Cardiac septum (tissue), 1 donor: ENCODE measurements at regions of chr17 and their contacts with region 1.

Region 1: GRCh38 chr17:78970834-78971773 is 8.6 kb downstream of the LGALS3BP start:
- DNase-seq: peak; percentile 90

Region 2: DNA sequence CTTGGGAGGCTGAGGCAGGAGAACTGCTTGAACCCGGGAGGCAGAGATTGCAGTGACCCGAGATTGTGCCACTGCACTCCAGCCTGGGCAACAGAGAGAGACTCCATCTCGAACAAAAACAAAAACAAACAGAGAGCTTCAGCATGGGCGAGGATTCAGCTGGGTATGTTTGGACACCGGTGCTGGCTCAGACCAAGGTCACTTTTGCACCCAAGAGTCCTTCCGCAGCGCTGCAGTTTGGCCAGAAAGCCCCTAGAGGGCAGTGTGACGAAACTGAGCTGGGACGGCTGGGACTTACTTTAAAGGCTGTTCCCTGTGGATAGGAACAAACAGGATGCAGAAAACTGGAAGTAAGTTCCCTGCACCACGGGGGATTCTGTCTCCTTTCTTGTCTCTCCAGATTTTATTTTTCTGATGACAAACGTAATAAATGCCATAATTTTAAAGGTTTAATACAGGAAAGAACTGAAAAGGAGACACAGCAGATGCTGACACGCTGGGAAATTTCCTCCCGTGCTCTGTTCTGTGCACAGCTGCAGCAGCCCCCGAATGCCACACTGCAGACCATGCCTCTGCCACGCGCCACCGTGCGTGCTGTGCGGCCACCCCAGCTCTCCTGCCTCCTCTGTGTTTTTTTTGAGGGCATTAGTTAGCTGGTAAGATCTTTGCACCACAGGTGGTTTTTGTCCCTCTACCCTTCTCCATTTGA is 105.3 kb before region 1 on chr17:
- intact Hi-C with region 1: loop called (anchors 1 kb)
- DNase-seq: peak; percentile 93

Region 3: DNA sequence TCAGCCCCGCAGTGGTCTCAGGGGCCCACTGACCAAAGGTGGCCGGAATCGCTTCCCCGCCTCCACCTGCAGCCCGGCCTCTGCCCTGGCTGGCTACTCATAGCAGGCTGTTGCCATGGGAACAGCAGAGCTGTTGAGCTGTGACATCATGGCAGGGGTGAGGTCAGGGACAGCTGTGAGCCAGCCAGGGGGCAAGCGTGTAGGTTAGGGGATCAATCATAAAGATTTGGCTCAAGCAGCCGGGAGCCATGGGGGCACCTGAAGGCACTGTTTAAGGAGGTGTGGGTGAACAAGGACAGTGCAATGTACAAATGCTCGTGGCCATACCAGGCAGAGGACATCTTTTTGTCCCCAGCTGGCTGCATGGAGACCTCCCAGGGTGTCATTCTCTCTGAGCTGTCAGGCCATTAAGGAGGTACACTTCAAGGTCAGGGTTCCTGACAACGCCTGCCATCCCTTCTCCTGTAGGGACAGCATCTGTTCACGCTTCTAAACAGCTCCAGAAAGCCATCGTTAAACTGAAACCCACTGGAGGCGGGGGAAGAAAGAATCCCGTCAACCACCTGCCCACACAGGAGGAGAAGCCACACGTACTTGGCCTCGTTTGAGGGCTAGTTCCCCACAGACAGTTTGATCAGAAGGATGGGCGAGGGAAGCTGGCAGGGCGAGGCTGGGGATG is 67.9 kb before region 1 on chr17 and contains the start of gene CEP295NL:
- intact Hi-C with region 1: no loop called
- DNase-seq: no peak
- total RNA-seq, gene CEP295NL: 1.6 TPM

Region 4: DNA sequence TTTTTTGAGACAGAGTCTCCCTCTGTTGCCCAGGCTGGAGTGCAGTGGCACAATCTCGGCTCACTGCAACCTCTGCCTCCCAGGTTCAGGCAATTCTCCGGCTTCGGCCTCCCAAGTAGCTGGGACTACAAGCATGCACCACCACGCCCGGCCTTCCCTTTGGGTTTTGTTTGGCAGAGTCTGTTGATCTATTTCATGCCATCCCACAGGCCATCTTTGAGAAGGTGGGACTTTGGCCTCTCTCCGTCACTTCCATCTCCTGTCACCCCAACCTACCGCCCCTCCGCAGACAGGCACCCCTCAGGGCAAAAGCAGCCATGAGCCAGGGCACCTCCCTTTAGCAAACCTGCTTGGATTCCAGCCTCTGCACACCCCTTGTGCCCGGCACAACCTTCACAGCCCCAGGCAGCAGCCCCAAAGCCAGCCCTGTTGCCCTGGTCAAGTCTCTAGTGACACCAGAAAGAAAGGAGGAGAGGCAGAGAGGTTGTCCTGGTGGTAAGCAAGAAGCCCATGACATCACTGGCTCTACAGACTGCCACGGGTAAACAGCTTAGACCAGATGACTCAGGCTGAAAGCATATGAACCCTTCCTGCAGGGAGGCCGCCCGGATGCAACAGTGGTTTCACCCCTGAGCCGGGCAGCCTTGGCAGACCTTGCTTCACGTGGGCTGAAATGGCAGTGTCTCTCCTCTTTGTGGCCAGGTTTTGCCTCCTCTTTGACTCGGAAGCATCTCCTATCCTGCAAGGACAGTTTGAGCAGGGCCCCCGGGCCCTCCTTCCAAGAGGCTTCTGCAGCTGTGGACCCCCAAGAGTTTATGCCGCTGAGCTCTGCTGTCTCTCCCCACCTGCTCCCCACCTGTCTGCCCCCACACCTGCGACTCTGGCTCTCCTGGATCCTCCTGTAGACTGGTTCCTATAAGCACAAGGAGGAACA is 37.8 kb before region 1 on chr17:
- intact Hi-C with region 1: loop called (anchors 5 kb)
- DNase-seq: no peak